Dorsolateral prefrontal cortex (tissue), 120 donors: ENCODE measurements at regions of chr3 and their contacts with region 1.

Region 1: DNA sequence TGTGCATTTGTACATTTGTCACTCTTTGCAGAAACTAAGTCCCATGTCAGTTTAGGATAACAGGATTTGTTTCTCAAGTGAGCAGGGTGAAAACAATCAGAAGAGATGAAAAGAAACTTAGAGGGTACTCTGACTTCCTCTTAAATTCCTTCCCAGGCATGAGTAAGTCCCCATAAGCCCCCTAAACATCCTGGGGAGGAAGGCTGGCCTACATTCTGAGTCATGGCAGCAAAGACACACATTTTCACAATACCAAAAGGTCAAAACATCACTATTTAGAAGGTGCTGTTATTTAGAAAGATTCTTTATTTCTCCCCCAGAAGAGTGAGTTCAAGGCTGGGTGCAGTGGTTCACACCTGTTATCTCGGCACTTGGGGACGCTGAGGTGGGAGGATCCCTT is 7.6 kb upstream of the FOXP1 start:
- DNase-seq: no peak
- H3K4me3 ChIP-seq: no peak overlapping the region
- H3K27ac ChIP-seq: no peak overlapping the region
- H3K27me3 ChIP-seq: no peaks in the 10 kb centered on the region
- CTCF ChIP-seq: no peak

Region 2: GRCh38 chr3:70539908-70540307 is 1051.2 kb before region 1 on chr3:
- intact Hi-C with region 1: loop called in 1 of 2 experiments (anchors 5 kb)
- DNase-seq: no peak
- H3K4me3 ChIP-seq: no peak overlapping the region
- H3K27ac ChIP-seq: no peak overlapping the region
- H3K27me3 ChIP-seq: peaks cover 0 to 10% (median 0%) of the 10 kb centered on the region in 45 donors
- CTCF ChIP-seq: no peak

Region 3: GRCh38 chr3:71702131-71703024 is 111.3 kb after region 1 on chr3:
- intact Hi-C with region 1: no loop called
- DNase-seq: no peak
- H3K4me3 ChIP-seq: no peak overlapping the region
- H3K27ac ChIP-seq: no peak overlapping the region
- H3K27me3 ChIP-seq: no peaks in the 10 kb centered on the region
- CTCF ChIP-seq: no peak